Uterus (tissue), 4 donors: ENCODE measurements at regions of chr12 and their contacts with region 1.

Region 1: DNA sequence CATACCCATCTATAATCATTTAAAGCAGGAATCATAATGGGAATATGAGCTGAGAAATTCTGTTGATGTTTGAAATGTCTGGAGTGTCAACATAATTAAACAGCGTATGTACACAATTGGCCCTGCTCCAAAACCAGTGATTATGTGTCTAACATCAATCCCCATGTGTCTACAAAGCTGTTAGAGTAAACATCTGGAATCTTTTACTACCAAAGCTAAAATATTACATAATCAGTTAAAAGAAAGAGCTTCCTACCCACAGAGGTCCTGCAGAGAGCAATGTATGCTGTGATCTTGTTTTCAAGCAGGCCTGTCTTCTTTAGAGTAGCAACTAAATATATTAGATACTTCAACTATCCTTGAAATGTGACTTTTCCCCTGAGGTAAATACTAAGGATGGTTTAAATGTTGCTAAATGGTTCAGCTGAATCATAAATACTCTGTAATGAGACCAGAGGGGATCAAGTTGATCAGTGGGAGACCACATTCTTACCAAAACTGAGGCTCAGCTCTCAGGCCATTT is 74.3 kb downstream of the RASSF8 start:
- DNase-seq: no peak
- H3K4me3 ChIP-seq: no peak overlapping the region
- H3K27ac ChIP-seq: no peak overlapping the region
- H3K4me1 ChIP-seq: peaks cover 0 to 5% of the 10 kb centered on the region in 2 donors
- H3K27me3 ChIP-seq: no peaks in the 10 kb centered on the region
- CTCF ChIP-seq: no peak
- POLR2A ChIP-seq: no peak

Region 2: DNA sequence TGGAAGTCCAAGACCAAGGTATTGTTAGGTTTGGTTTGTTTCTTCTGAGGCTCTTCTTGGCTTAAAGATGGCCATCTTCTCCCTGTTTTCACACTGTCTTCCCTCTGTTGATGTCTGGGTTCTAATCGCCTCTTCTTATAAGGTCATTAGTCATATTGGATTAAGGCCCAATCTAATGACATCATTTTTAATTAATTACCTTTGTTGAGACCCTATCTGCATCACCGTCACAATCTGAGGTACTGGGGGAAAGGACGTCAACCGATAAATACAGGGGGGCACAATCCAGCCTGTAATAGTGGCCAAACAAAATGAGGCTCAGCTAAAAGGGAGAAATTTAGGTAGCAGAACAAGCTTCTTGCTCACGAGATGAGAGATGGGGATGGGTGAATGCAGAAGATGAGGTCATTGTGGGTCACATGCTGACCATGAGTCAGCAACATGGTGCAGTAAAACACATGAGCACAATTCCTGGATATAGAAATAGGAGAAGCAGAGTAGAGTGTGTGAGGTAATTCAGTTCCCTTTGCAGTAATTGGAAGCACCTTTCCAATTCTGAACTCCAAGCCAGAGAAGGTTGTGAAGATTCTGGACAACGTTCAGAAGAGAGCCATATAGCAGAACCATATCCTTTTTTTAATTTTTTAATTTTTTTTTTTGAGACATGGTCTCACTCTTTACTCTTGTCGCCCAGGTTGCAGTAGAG is 417.8 kb before region 1 on chr12:
- intact Hi-C with region 1: no loop called
- DNase-seq: no peak
- H3K4me3 ChIP-seq: no peak overlapping the region
- H3K27ac ChIP-seq: no peak overlapping the region
- H3K4me1 ChIP-seq: no peaks in the 10 kb centered on the region
- H3K27me3 ChIP-seq: no peaks in the 10 kb centered on the region
- CTCF ChIP-seq: no peak
- POLR2A ChIP-seq: no peak

Region 3: DNA sequence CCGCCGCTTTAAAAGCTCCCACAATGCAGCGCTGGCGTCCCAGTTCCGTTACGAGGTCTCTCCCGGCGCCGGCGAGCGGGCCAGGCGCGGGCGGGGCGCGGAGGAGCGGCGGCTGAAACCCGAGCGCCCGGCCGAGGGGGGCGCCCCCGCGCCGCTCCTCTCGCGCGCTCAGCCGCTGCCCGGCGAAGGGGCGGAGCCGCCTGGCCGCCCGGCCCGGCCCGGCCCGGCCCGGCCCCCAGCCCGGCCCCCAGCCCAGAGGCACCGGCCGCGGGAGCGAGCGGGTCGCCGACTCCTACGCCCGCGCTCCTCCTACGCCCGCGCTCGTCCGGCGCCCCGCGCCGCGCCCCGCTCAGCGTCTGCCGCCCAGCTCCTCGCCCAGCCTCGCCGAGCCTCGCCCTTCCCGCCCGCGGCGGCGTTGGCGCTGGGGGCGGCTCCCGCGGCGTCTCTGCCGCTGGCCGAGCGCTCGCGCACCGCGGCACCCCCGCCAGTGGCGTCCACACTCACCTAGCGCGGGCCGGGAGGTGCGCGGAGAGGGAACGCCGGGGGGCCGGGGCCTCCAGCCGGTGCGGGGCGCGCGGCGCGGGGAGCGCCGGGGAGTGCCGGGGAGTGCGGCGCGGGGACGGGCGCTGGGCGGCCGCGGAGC is 74.2 kb before region 1 on chr12 and contains the start of gene RASSF8:
- intact Hi-C with region 1: loop called (anchors 10 kb)
- DNase-seq: peak; percentile 72 to 81
- H3K4me3 ChIP-seq: peak within 1 kb of the TSS; percentile 80 to 95
- H3K27ac ChIP-seq: peak within 1 kb of the TSS; percentile 95 to 98
- H3K4me1 ChIP-seq: peaks cover 0 to under 1% of the 10 kb centered on the region in 2 donors
- H3K27me3 ChIP-seq: no peaks in the 10 kb centered on the region
- CTCF ChIP-seq: peak in 2 of 4 experiments; percentile 1 to 8
- POLR2A ChIP-seq: peak; percentile 62 to 95
- total RNA-seq, gene RASSF8: 54.1 to 174 (median 119) TPM